ENCODE measurements at regions of chr2 and their contacts with region 1.

Region 1: DNA sequence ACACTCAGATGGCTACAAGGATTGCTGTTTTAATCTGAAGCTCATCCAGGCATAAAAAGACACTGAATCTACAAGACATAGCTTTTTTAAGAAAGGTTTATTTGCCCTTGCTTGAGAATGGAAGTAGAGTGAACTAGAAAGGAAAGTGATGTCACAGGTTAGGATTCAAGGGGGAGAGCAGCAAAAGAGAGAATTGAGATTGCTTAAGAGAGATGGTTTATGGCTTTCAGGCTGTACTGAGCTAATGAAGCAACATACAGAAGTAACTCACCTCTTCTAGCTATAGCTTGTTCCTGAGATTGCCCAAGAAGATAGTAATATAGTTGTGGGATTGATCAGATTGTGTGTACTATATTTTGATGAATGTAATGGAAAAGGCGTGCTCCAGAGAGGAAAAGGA is 26.1 kb upstream of the ACVR2A start:
- DNase-seq: no peak
- ATAC-seq: no peak
- H3K4me3 ChIP-seq: no peak overlapping the region
- H3K27ac ChIP-seq: no peak overlapping the region
- H3K4me1 ChIP-seq: no peaks in the 10 kb centered on the region
- H3K27me3 ChIP-seq: no peaks in the 10 kb centered on the region
- CTCF ChIP-seq: no peak
- POLR2A ChIP-seq: no peak

Region 2: DNA sequence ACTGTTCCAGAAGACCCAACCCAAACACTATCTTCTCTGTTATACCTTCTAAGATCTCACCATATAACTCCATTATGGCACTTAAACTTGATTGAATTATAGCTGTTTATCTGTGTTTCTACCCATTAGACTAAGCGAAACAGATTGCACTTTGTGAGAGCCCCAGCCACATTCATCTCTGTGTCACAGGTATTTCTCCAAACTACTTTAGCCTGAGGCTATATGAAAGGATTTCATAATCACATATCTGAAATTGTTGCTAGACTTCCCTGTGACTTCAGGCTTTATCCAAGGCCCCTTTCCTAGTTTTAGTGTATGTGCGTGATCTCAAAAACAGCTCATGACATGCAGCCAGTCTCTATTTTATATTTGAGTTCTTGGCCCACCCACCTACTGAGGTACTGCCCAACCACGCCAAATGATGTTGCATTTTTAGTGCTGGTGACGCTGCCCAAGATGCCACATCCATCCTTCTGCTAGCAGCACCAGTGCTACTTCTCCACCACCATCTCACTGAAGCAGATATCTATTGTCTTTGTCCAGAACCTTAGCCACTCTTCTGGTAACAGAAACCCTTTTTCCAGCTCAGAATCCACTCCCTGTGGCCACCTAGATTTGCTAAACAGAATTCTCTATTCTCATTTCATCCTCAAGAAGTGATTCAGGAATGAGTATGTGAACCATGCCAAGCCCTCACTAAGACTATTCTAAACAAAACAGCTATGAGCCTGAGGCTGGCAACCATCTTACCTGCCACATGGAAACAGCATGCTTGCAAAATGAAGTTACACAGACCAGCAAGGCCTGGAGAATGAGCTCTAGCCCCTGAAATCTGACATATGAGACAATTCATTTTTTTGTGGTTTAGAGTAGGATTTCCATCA is 718.7 kb before region 1 on chr2:
- in situ Hi-C with region 1: no loop called
- intact Hi-C with region 1: loop called (anchors 10 kb)
- DNase-seq: no peak
- ATAC-seq: no peak
- H3K4me3 ChIP-seq: no peak overlapping the region
- H3K27ac ChIP-seq: no peak overlapping the region
- H3K4me1 ChIP-seq: no peaks in the 10 kb centered on the region
- H3K27me3 ChIP-seq: no peaks in the 10 kb centered on the region
- CTCF ChIP-seq: no peak
- POLR2A ChIP-seq: no peak

Region 3: DNA sequence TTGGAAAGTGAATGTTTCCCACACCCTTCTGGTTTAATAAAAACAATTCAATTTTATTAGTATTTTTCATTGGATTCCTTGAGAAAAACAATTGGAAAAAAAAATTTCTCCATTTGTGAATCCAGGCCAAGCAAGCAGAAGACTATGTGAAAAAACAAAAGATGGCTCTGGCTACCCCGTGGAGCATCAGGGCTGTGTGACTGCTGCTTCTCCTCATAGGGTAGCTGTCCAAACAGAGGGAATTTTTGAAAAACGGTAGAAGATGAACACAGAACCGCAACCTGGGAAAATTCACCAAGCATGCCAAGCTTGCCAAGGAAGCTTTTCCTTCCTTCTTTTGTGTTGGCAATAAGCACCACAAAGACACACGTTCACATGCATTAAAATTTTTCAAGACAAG is 45.3 kb before region 1 on chr2:
- in situ Hi-C with region 1: no loop called
- intact Hi-C with region 1: no loop called
- DNase-seq: no peak
- ATAC-seq: no peak
- H3K4me3 ChIP-seq: no peak overlapping the region
- H3K27ac ChIP-seq: no peak overlapping the region
- H3K4me1 ChIP-seq: no peaks in the 10 kb centered on the region
- H3K27me3 ChIP-seq: no peaks in the 10 kb centered on the region
- CTCF ChIP-seq: no peak
- POLR2A ChIP-seq: no peak

Region 4: DNA sequence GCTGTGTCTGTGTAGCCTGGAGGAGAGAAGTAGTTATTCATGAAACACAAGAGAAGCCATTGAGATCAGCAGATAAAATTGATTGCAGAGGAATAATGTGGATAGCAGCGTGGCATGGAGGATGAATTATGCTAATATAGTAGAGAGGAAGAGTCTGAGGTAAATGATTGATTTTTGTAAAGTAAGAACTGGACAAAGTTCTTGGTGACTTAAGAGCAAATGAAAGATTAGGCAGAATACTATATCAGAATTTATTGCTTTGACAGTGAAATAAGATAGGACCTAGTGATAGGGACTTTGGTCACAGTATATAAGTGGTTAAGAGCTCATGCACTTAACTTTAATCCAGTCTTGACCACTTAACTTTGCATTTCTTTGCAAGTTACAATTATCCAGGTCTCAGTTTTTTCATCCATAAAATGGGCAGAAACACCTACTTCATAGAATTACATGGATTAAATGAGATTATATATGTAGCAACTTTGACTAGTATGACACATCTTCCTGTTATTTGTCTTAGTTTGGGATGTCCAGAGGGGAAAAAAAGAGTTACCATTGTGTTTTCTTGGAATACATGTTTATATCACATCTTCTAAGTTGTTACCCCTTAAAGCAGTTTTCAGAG is 55.2 kb after region 1 on chr2:
- in situ Hi-C with region 1: no loop called
- intact Hi-C with region 1: no loop called
- DNase-seq: no peak
- ATAC-seq: no peak
- H3K4me3 ChIP-seq: no peak overlapping the region
- H3K27ac ChIP-seq: no peak overlapping the region
- H3K4me1 ChIP-seq: peaks cover 40 to 59% of the 10 kb centered on the region in 2 donors
- H3K27me3 ChIP-seq: no peaks in the 10 kb centered on the region
- CTCF ChIP-seq: no peak
- POLR2A ChIP-seq: no peak